ENCODE measurements at regions of chr7 and their contacts with region 1.

Region 1: DNA sequence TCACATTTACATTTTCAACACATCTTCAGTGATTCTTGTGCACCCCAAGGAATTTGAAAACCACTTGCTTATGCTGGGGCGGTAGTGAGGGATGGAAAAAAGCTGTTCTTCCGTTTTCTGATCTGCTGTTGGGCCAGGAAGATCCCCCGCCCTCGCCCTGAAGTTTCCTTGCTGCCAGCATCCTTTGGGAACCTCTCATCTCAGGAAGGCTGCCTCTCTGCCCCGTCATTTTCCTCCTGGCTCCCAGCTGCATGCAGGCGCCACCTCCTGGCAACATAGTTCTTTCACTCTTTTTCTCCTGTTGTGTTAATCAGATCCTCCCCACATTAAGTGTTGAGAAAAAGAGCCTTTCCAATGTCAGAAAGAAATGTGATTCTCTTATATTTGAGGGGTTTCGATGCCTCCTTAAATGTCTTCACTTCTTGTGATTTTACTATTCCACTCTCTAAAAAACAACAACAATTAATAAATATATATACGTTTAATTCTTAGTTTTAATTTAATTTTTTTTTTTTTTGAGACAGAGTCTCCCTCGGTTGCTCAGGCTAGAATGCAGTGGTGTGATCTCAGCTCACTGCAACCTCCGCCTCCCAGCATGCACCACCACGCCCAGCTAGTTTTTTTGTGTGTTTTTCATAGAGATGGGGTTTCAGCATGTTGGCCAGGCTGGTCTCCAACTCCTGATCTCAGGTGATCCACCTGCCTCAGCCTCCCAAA is 122.9 kb downstream of the RALA start:
- DNase-seq: peak; percentile 78 to 88
- ATAC-seq: peak; percentile 82
- H3K4me3 ChIP-seq: no peak overlapping the region
- H3K27ac ChIP-seq: no peak overlapping the region
- H3K4me1 ChIP-seq: no peaks in the 10 kb centered on the region
- H3K27me3 ChIP-seq: no peaks in the 10 kb centered on the region

Region 2: GRCh38 chr7:39580149-39580874 is 165.9 kb before region 1 on chr7:
- intact Hi-C with region 1: loop called (anchors 1 to 2 kb)
- DNase-seq: peak; percentile 81 to 84
- ATAC-seq: peak; percentile 92
- H3K4me3 ChIP-seq: no peak overlapping the region
- H3K27ac ChIP-seq: no peak overlapping the region
- H3K4me1 ChIP-seq: no peaks in the 10 kb centered on the region
- H3K27me3 ChIP-seq: no peaks in the 10 kb centered on the region